ENCODE measurements at regions of chr14 and their contacts with region 1.

Region 1: DNA sequence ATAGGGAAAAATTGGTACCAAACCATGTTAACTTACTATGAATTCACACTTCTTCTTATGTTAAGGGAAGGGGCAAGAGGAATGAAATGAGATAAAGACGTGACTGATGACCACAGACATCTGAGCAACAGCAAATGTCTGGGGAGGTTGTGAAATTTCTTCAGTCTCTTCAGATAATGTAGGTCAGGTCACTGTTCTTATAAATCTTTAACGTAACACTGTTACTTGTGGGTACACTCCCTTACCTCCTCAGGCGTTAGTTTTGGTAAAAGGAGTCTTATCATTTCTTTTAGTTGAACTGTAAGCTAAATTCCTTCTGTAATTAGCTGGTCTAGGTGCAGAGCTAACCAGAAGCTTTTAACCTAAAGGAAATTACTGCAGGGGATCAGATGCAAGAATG is 405.0 kb upstream of the LRFN5 start:
- DNase-seq: no peak

Region 2: DNA sequence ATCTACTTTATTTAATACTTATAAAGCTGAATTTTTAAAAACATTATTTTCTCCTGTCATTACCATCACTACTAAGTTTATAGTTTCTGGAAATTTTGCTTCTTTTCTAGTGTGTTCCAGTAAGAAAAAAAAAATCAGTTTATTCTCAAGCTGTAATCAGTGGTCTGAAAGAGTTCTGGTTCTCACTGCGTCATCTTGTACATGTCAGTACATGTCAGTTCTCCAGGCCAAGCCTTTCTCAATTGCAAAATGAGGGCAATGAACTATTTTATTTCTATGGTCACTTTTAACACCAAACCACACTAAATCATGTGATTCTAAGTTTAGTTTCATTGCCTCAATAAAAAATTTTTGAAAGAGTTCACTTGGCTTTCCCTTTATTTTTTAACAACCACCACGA is 64.0 kb before region 1 on chr14:
- intact Hi-C with region 1: loop called (anchors 10 kb)
- DNase-seq: no peak

Region 3: GRCh38 chr14:41154143-41154807 is 47.4 kb before region 1 on chr14:
- intact Hi-C with region 1: no loop called
- DNase-seq: no peak

Measured in head of caudate nucleus (tissue), 42 donors.